Posterior cingulate gyrus (tissue), 11 donors: ENCODE measurements at regions of chr3 and their contacts with region 1.

Region 1: GRCh38 chr3:134449277-134449676 is 36.5 kb downstream of the ANAPC13 start:
- DNase-seq: peak in 7 of 10 donors; percentile 44 to 94 (median 69)

Region 2: GRCh38 chr3:134308350-134308891 is 140.9 kb before region 1 on chr3:
- intact Hi-C with region 1: loop called (anchors 5 kb)
- DNase-seq: peak; percentile 70 to 97 (median 88)

Region 3: GRCh38 chr3:134364061-134364935 is 85.0 kb before region 1 on chr3:
- intact Hi-C with region 1: no loop called
- DNase-seq: peak; percentile 64 to 96 (median 78)

Region 4: GRCh38 chr3:134406331-134407238 is 42.7 kb before region 1 on chr3:
- intact Hi-C with region 1: loop called (anchors 5 kb)
- DNase-seq: peak; percentile 62 to 97 (median 82)

Region 5: GRCh38 chr3:134485718-134486576 is 36.7 kb after region 1 on chr3 and contains the starts of genes ANAPC13 and CEP63:
- intact Hi-C with region 1: no loop called
- DNase-seq: peak; percentile 83 to 98 (median 90)

Region 6: DNA sequence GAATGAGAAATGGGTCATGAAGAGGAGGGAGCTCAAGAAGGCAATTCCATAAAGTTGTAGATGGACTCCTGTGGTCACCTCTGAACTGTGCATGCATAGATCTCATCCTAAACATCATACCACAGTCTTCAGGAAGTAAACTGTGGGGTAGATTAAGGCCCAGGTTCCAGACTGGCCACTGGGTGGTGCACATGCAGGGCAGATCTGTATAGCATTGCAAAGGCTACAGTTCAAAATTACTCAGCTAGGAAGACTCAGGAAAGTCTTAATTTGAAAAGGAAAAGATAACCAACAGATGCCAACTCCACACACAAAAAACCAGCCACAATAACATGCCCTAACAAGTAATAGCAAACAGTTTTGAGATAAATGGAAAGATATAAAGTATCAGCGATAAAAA is 181.2 kb after region 1 on chr3:
- intact Hi-C with region 1: no loop called
- DNase-seq: no peak